MCF 10A (cell line): ENCODE measurements at regions of chr3 and their contacts with region 1.

Region 1: DNA sequence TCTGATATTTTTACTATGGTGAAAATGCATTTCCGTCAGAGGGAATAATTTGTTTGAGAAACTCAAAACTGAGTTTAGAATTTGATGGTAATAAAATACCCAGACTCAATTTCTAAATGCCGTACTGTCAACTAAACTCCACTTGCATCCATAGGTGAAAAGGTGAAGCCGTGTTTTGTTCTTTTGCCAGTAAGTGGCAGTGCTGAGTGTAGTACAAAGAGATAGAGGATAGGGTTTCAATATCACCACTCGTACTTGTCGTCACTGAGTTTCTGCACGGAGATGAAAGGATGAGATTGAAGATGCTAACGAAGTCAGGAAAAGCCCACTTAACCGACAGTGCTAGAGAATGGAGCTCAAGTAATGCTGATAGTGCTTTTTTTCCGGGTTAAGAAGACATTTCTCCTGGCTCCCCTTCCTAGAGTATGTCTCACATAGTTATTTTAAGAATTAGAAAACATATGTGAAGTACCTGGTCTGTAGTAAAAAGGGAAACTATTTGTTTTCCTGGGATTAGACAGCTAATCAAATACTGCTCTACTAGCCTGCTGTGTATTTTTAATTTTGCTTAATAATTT is 345.1 kb downstream of the IL5RA start:
- DNase-seq: peak; percentile 43
- H3K4me3 Mint-ChIP-seq: no peak overlapping the region
- H3K27ac Mint-ChIP-seq: no peak overlapping the region
- H3K4me1 Mint-ChIP-seq: no peaks in the 10 kb centered on the region
- H3K27me3 Mint-ChIP-seq: peaks cover 71% of the 10 kb centered on the region
- CTCF ChIP-seq: peak; percentile 34

Region 2: GRCh38 chr3:2465842-2466241 is 299.2 kb before region 1 on chr3:
- CTCF ChIA-PET with region 1: no interaction called
- POLR2A ChIA-PET with region 1: no interaction called
- intact Hi-C with region 1: no loop called
- DNase-seq: no peak
- H3K4me3 Mint-ChIP-seq: no peak overlapping the region
- H3K27ac Mint-ChIP-seq: no peak overlapping the region
- H3K4me1 Mint-ChIP-seq: no peaks in the 10 kb centered on the region
- H3K27me3 Mint-ChIP-seq: peaks cover 56% of the 10 kb centered on the region
- CTCF ChIP-seq: no peak

Region 3: GRCh38 chr3:2921903-2922302 is 156.8 kb after region 1 on chr3:
- CTCF ChIA-PET with region 1: interaction called, 9 read pairs
- POLR2A ChIA-PET with region 1: no interaction called
- intact Hi-C with region 1: loop called (anchors 1 kb)
- DNase-seq: peak; percentile 41
- H3K4me3 Mint-ChIP-seq: no peak overlapping the region
- H3K27ac Mint-ChIP-seq: no peak overlapping the region
- H3K4me1 Mint-ChIP-seq: no peaks in the 10 kb centered on the region
- H3K27me3 Mint-ChIP-seq: peaks cover 67% of the 10 kb centered on the region
- CTCF ChIP-seq: peak; percentile 43

Region 4: DNA sequence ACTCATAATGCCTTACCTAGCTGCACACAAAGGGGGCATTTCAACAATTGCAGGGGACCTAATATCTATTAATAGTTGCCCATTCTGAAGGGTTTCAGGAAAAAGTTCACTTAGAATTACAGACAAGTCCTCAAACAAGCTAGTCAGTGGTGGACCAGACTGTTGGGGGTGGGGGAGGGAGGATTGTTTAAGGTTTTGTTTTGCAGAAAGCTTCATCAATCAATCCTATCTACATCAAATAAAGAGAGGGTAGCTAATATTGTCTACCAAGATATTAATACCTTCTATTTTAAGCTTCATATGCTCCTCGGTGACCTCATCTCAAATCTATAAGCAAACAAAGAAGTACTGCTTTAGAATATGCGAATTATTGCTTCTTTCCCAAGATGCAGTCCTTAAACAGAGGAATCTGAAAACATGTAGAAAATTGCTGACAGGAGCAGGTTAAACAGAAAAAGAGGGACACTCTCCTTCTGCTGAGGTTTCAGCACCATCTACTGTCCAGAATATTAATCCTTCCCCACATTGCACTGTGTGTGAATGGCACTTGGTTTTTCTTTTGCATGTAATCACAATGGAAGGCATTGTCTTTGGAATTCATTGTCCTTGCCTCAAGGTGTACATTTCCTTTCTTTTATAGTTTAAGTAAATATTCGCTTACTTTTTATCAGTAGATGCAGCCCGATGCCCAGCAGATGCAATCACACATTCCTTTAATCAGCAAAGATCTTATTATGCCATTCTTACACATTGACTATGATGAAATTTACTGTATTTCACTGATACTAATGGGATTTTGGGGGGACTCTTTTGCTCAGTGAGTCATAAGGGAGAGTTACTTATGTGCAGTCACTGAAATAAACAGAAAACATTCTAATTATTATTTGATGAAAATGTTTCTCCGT is 250.3 kb after region 1 on chr3:
- CTCF ChIA-PET with region 1: interaction called, 5 read pairs
- POLR2A ChIA-PET with region 1: no interaction called
- intact Hi-C with region 1: loop called (anchors 1 kb)
- DNase-seq: peak; percentile 53
- H3K4me3 Mint-ChIP-seq: no peak overlapping the region
- H3K27ac Mint-ChIP-seq: no peak overlapping the region
- H3K4me1 Mint-ChIP-seq: no peaks in the 10 kb centered on the region
- H3K27me3 Mint-ChIP-seq: peaks cover 100% of the 10 kb centered on the region
- CTCF ChIP-seq: peak; percentile 50

Region 5: DNA sequence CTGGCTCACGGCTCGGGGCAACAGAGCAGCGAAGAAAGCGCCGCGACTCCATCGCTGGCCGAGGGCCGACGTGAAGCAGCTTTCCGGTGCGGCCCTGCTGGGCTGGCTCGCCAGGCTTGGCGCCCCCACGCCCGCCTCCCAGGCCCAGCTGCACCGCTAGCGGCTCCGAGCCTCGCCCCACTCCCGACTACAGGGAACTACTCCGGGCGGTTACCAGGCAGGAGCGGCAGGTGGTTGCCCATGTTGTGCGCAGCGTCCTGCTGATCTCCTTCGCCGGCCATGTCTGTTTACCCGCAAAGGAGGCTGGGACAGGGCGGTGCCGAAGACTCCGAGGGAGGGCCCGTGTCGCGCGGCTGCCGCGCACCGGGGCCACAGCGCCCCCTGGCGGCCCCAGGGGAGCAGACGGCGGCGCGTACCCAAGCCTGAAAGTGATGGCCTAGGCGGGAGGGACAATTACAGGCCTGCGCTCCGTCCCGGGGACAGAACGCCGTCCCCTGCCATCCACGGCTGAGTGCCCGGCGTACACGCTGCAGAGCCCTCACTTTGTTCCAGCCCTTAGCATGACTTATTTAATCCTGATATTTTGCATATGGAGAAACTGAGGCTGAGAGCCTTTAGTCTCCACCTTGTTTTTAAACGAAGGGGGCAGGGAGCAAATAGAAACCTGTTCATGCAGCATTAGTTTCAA is 414.5 kb after region 1 on chr3 and contains the start of gene CRBN:
- CTCF ChIA-PET with region 1: no interaction called
- POLR2A ChIA-PET with region 1: no interaction called
- intact Hi-C with region 1: loop called (anchors 10 kb)
- DNase-seq: peak; percentile 85
- H3K4me3 Mint-ChIP-seq: peak within 1 kb of the TSS; percentile 82
- H3K27ac Mint-ChIP-seq: peak within 1 kb of the TSS; percentile 31
- H3K4me1 Mint-ChIP-seq: peaks cover 14% of the 10 kb centered on the region
- H3K27me3 Mint-ChIP-seq: no peaks in the 10 kb centered on the region
- CTCF ChIP-seq: peak; percentile 96
- total RNA-seq, gene CRBN: 23.0 and 25.4 TPM in 2 replicates